ENCODE measurements at regions of chr1 and their contacts with region 1.

Region 1: GRCh38 chr1:42311138-42311537 is 23.9 kb downstream of the FOXJ3 start:
- DNase-seq: no peak
- H3K4me3 ChIP-seq: no peak overlapping the region
- H3K27ac ChIP-seq: no peak overlapping the region
- H3K4me1 ChIP-seq: peaks cover 17% of the 10 kb centered on the region
- H3K27me3 ChIP-seq: no peaks in the 10 kb centered on the region
- CTCF ChIP-seq: no peak

Region 2: GRCh38 chr1:42214447-42214871 is 96.7 kb before region 1 on chr1:
- CTCF ChIA-PET with region 1: no interaction called
- dilution Hi-C with region 1: loop called (anchors 5 kb)
- in situ Hi-C with region 1: no loop called
- intact Hi-C with region 1: no loop called
- DNase-seq: peak; percentile 72
- H3K4me3 ChIP-seq: peak overlapping the region in 1 of 3 experiments; percentile 11
- H3K27ac ChIP-seq: peak overlapping the region; percentile 20
- H3K4me1 ChIP-seq: peaks cover 32% of the 10 kb centered on the region
- H3K27me3 ChIP-seq: no peaks in the 10 kb centered on the region
- CTCF ChIP-seq: no peak

Region 3: GRCh38 chr1:42259739-42260064 is 51.4 kb before region 1 on chr1:
- CTCF ChIA-PET with region 1: no interaction called
- dilution Hi-C with region 1: loop called (anchors 5 kb)
- in situ Hi-C with region 1: no loop called
- intact Hi-C with region 1: no loop called
- DNase-seq: peak; percentile 39
- H3K4me3 ChIP-seq: no peak overlapping the region
- H3K27ac ChIP-seq: no peak overlapping the region
- H3K4me1 ChIP-seq: peaks cover 3% of the 10 kb centered on the region
- H3K27me3 ChIP-seq: no peaks in the 10 kb centered on the region
- CTCF ChIP-seq: no peak

Region 4: GRCh38 chr1:42385283-42385682 is 74.1 kb after region 1 on chr1:
- CTCF ChIA-PET with region 1: no interaction called
- dilution Hi-C with region 1: no loop called
- in situ Hi-C with region 1: no loop called
- intact Hi-C with region 1: no loop called
- DNase-seq: no peak
- H3K4me3 ChIP-seq: no peak overlapping the region
- H3K27ac ChIP-seq: no peak overlapping the region
- H3K4me1 ChIP-seq: peaks cover 4% of the 10 kb centered on the region
- H3K27me3 ChIP-seq: no peaks in the 10 kb centered on the region
- CTCF ChIP-seq: no peak

Measured in mammary epithelial cell (primary cell).